ENCODE measurements at regions of chr12 and their contacts with region 1.

Region 1: DNA sequence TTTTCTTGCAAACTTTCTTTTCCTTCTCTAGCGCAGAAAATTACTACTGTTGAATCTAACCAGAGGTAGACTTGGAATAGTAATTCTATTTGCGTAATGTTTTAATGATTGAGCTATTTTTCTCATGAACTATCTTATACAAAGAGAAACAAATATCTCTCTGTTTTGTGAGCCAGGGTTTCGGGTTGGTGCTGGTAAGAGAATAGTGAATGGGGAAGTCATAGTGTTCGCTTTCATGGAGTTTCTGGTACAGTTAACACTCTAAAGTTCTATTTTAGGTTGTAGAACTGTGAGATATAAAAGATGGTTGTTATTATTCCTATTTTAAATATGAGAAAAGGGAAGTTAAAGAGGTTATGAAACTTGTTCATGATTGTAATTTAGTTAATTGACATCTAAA is 6.6 kb downstream of the CLEC1B start:
- H3K4me3 Mint-ChIP-seq: peak overlapping the region; percentile 58
- H3K27ac Mint-ChIP-seq: peak overlapping the region; percentile 76
- H3K4me1 Mint-ChIP-seq: peaks cover 21% of the 10 kb centered on the region
- H3K27me3 Mint-ChIP-seq: no peaks in the 10 kb centered on the region

Region 2: DNA sequence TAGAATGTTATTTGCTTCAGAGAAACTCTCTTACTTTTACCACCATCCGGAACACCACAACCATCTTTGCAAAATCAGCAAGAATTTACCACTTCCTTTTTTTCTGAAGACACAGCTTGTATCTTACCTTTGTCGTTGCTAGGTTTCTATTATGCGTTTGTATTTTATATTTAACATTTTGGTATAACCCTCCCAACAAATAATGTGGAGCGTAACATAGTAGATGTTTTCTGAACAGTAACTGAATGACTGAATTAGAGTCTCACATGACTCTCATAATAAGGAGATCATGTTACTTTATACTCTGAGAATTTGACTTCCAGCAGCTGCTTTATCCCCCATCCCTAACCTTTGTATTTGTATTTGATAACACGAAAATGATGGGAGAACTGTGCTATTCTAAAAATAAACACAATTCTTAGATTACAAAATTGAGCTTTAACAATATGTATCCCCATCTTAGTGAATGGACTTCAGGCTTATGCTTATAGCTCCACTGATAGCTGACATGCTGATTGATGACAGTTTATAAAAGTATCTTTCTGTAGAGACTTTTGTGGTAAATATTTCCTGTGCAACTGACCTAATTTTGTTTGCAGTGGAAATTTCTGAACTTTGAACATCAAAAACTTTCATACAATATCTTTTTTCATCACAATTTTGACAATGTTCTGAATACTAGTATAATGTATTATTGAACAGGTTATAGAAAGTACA is 376.7 kb before region 1 on chr12:
- intact Hi-C with region 1: no loop called
- H3K4me3 Mint-ChIP-seq: no peak overlapping the region
- H3K27ac Mint-ChIP-seq: no peak overlapping the region
- H3K4me1 Mint-ChIP-seq: peaks cover 29% of the 10 kb centered on the region
- H3K27me3 Mint-ChIP-seq: no peaks in the 10 kb centered on the region

Region 3: DNA sequence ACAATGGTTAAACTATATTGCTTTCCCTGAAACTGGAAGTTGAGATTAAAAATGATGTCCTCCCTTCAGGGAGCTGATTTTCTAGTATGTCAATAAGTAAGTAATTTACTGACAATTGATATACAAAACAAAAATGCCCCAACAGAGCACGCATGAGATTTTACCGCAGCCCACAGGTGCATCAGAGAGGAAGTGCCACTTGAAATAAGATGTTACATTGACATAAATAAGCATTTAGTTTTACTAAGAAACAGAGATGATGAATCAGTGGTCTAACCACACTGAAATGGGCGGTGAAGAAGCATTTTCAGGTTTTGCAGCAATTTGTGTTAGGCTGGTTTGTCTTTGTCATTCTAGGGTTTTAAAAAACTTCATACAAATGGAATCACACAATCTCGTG is 250.6 kb before region 1 on chr12:
- intact Hi-C with region 1: loop called (anchors 10 kb)
- H3K4me3 Mint-ChIP-seq: peak overlapping the region; percentile 42
- H3K27ac Mint-ChIP-seq: peak overlapping the region; percentile 74
- H3K4me1 Mint-ChIP-seq: peaks cover 53% of the 10 kb centered on the region
- H3K27me3 Mint-ChIP-seq: no peaks in the 10 kb centered on the region

Measured in dendritic cell treated with granulocyte-macrophage colony-stimulating factor and Interleukin-4, amounts not matched to agents 40 ng/mL and 50 ng/mL, for 4 days (primary cell).